ENCODE measurements at regions of chr3 and their contacts with region 1.

Region 1: GRCh38 chr3:49411968-49412631 is at the starts of genes RHOA and TCTA:
- DNase-seq: peak; percentile 98
- H3K4me3 ChIP-seq: peak within 1 kb of the TSS; percentile 84
- H3K27ac ChIP-seq: peak within 1 kb of the TSS; percentile 91
- H3K4me1 ChIP-seq: no peaks in the 10 kb centered on the region
- H3K27me3 ChIP-seq: no peaks in the 10 kb centered on the region
- CTCF ChIP-seq: no peak
- total RNA-seq, gene RHOA: 194 and 198 TPM in 2 replicates
- total RNA-seq, gene TCTA: 11.6 and 12.0 TPM in 2 replicates

Region 2: GRCh38 chr3:49358217-49358883 is 53.8 kb before region 1 on chr3 and contains the start of gene GPX1:
- CTCF ChIA-PET with region 1: no interaction called
- POLR2A ChIA-PET with region 1: no interaction called
- intact Hi-C with region 1: loop called (anchors 10 kb)
- DNase-seq: peak; percentile 94
- H3K4me3 ChIP-seq: peak within 1 kb of the TSS; percentile 61
- H3K27ac ChIP-seq: peak within 1 kb of the TSS; percentile 73
- H3K4me1 ChIP-seq: peaks cover 12% of the 10 kb centered on the region
- H3K27me3 ChIP-seq: no peaks in the 10 kb centered on the region
- CTCF ChIP-seq: no peak
- total RNA-seq, gene GPX1: 122 and 128 TPM in 2 replicates

Region 3: GRCh38 chr3:49813497-49814174 is 401.5 kb after region 1 on chr3 and contains the start of gene UBA7:
- CTCF ChIA-PET with region 1: no interaction called
- POLR2A ChIA-PET with region 1: interaction called, 21 read pairs
- intact Hi-C with region 1: no loop called
- DNase-seq: no peak
- H3K4me3 ChIP-seq: no peak within 1 kb of the TSS
- H3K27ac ChIP-seq: no peak within 1 kb of the TSS
- H3K4me1 ChIP-seq: no peaks in the 10 kb centered on the region
- H3K27me3 ChIP-seq: no peaks in the 10 kb centered on the region
- CTCF ChIP-seq: no peak
- total RNA-seq, gene UBA7: 2.2 and 3.8 TPM in 2 replicates

Measured in A673 (cell line).